ENCODE measurements at regions of chr3 and their contacts with region 1.

Region 1: GRCh38 chr3:71064288-71064955 is 519.1 kb downstream of the FOXP1 start:
- DNase-seq: peak; percentile 64 to 80
- ATAC-seq: peak; percentile 37 to 68 (median 55)
- H3K4me3 ChIP-seq: peak overlapping the region; percentile 55
- H3K4me3 Mint-ChIP-seq: no peak overlapping the region
- H3K27ac ChIP-seq: peak overlapping the region; percentile 82
- H3K27ac Mint-ChIP-seq: no peak overlapping the region
- H3K4me1 ChIP-seq: peaks cover 33% of the 10 kb centered on the region
- H3K4me1 Mint-ChIP-seq: peaks cover 35 to 38% of the 10 kb centered on the region in 2 donors
- H3K27me3 ChIP-seq: no peaks in the 10 kb centered on the region
- H3K27me3 Mint-ChIP-seq: no peaks in the 10 kb centered on the region
- CTCF ChIP-seq: no peak

Region 2: GRCh38 chr3:71050538-71051258 is 13.7 kb before region 1 on chr3:
- intact Hi-C with region 1: loop called (anchors 2 kb)
- DNase-seq: peak in 1 of 2 donors; percentile 81
- ATAC-seq: peak; percentile 85 to 89 (median 86)
- H3K4me3 ChIP-seq: no peak overlapping the region
- H3K4me3 Mint-ChIP-seq: peak overlapping the region; percentile 18
- H3K27ac ChIP-seq: no peak overlapping the region
- H3K27ac Mint-ChIP-seq: peak overlapping the region; percentile 79 to 83
- H3K4me1 ChIP-seq: peaks cover 5% of the 10 kb centered on the region
- H3K4me1 Mint-ChIP-seq: peaks cover 54 to 77% of the 10 kb centered on the region in 2 donors
- H3K27me3 ChIP-seq: no peaks in the 10 kb centered on the region
- H3K27me3 Mint-ChIP-seq: no peaks in the 10 kb centered on the region
- CTCF ChIP-seq: no peak

Region 3: DNA sequence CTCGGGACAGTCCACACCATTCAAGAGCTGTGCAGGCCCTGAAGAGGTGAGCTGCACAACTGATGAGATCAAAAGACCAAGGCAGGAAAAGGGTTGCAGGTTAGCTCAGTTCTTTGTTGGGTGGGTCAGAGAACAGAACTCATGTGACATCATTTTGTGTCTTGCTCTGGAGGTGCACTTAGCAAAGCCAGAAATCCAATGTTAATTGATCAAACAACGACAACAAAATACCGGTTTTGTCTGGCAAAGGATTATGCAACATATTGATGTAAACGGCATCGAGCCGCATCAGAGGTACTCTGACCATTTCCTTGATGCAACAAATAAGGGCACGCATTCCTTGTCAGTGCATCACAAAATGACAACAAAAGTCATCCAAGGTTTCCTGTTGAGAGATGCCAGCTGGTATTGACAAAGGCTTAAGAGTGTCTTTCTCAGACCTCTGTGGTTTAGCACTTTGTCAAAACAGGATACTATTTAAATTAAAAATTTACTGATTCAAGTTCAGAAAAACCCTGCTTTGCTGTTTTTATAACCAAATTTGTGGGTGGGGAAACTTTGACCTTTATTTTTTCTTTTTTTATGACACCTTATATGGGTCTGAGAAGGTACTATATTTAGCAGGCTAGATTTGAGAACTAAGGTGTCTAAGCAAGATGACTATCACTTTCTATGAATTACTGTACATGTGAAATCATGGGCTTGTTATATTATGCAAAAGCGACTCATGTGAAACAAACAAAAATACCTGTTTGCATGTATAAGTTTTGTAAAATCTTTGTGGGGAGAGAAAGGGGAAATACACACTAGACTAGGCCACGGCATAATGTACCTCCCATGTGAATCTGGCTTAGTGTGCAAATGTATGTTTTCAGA is 23.0 kb after region 1 on chr3:
- intact Hi-C with region 1: loop called (anchors 2 kb)
- DNase-seq: peak in 1 of 2 donors; percentile 76
- ATAC-seq: peak; percentile 79 to 82 (median 81)
- H3K4me3 ChIP-seq: no peak overlapping the region
- H3K4me3 Mint-ChIP-seq: peak overlapping the region; percentile 52
- H3K27ac ChIP-seq: peak overlapping the region; percentile 49
- H3K27ac Mint-ChIP-seq: peak overlapping the region; percentile 69 to 75
- H3K4me1 ChIP-seq: peaks cover 32% of the 10 kb centered on the region
- H3K4me1 Mint-ChIP-seq: peaks cover 63 to 68% of the 10 kb centered on the region in 2 donors
- H3K27me3 ChIP-seq: no peaks in the 10 kb centered on the region
- H3K27me3 Mint-ChIP-seq: no peaks in the 10 kb centered on the region
- CTCF ChIP-seq: no peak

Region 4: DNA sequence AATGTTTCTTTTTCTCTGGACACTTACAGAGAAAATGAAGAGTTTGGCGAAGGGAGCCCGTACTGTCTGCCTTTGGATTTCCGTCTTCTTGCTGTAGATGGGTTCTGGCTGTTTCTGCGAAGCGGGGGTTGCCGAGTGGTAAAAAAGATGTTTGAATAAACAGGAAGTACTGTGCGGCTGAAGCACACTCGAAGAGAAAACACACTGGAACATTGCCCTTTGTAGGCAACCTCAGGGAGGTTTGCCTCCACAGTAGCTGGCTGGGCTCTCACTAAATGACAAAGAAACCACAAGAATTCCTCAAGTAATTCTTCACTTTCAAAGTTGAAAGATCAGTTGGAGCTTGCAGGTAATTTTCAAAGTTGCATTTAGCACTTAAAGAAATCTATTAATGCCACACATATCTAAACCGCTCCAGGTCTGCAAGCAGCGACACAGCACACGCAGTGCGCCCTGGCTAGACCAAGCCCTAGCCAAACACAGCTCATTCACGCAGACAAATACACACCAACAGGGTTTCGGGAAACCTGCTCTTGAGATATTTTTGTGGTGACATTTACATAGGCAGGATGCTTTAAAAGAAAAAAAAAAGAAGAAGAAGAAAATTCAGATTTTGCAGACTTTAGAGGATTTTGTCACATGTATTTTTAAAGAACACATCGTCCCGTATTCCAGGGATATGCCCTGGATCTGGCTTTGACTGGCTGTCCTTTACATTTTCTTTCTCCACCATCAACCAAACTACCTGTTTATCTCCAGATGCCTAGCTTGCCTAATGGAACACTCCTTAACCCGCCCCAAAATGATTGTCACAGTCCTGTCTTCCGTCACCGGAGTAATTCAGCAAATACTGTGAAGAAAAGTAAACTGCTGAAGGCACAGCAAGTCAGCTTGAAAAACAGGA is 66.3 kb after region 1 on chr3:
- intact Hi-C with region 1: loop called (anchors 2 kb)
- DNase-seq: peak; percentile 62 to 88
- ATAC-seq: peak; percentile 74 to 87 (median 84)
- H3K4me3 ChIP-seq: peak overlapping the region; percentile 63
- H3K4me3 Mint-ChIP-seq: peak overlapping the region; percentile 95
- H3K27ac ChIP-seq: peak overlapping the region; percentile 86
- H3K27ac Mint-ChIP-seq: peak overlapping the region; percentile 93 to 98
- H3K4me1 ChIP-seq: peaks cover 18% of the 10 kb centered on the region
- H3K4me1 Mint-ChIP-seq: peaks cover 62 to 69% of the 10 kb centered on the region in 2 donors
- H3K27me3 ChIP-seq: no peaks in the 10 kb centered on the region
- H3K27me3 Mint-ChIP-seq: no peaks in the 10 kb centered on the region
- CTCF ChIP-seq: no peak

Measured in natural killer cell (primary cell).